ENCODE measurements at regions of chr15 and their contacts with region 1.

Region 1: DNA sequence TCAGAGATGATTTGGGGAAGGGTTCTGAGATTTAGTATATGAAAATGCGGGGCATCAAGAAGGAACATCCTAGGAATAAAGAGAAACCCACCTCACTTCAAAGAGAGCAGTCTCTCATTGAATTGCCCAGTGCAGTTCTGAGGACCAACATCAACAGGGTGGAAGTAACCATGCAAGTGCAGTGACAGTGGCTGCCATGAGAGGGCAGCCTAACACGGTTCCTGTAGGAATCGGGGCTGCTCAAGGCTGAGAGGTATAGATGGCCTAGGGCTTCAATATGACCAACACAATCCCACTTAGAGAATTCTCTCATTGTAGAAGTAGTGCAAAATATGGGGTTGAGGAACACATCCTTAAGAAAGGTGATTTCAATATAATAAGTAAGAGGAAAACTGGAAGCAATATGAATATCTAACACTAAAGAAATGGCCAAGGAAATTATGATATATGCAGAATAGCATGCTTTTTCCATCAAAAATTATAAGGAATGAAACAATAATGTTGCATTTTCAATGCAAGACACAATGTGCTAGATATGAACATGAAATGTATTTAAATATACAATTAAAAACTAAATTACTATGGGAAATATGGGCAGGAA is 51.1 kb upstream of the ARRDC4 start:
- DNase-seq: peak; percentile 74 to 86
- H3K4me3 ChIP-seq: no peak overlapping the region
- H3K27ac ChIP-seq: no peak overlapping the region
- H3K4me1 ChIP-seq: peaks cover 0 to 4% (median 1%) of the 10 kb centered on the region in 4 donors
- H3K27me3 ChIP-seq: peaks cover 0 to 39% (median 6%) of the 10 kb centered on the region in 3 donors
- CTCF ChIP-seq: peak in 5 of 7 experiments; percentile 79 to 91 (median 85)
- EP300 ChIP-seq: no peak
- POLR2A ChIP-seq: no peak

Region 2: DNA sequence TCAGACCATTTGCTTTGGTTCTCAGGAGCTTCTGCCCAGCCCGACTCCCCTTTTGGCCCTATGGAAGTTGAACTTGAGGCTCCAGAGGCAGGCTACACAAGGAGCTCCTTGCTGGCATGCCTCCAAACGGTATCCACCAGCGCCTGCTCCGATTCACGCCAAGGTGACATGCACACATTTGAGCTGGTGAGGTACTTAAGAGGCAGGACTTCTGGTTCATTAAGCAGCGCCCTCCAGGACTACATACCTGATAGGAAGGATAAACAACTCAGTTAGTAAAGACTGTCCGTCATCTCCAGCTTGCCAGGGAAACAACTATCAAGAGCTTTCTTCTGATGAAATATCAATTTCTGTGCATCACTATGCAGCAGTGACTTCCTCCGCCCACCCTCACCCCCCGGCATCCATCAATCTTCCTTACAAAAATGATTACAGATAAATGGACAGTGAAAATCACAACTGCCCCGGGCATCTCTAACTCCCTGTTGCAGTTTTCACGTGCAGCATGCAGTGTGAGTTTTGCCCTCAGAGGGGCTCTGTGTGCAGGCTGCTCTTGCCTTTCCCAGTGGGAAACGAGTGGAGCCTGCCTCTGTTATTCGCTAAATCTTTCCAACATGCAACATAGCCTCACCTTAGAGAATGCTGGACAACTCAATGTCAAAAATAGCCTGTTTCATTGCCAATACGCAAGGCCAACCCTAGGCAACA is 174.0 kb after region 1 on chr15:
- intact Hi-C with region 1: loop called (anchors 5 kb)
- DNase-seq: peak in 1 of 2 donors; percentile 49
- H3K4me3 ChIP-seq: no peak overlapping the region
- H3K27ac ChIP-seq: no peak overlapping the region
- H3K4me1 ChIP-seq: no peaks in the 10 kb centered on the region
- H3K27me3 ChIP-seq: no peaks in the 10 kb centered on the region
- CTCF ChIP-seq: no peak
- EP300 ChIP-seq: no peak
- POLR2A ChIP-seq: no peak

Region 3: GRCh38 chr15:98177924-98178592 is 268.7 kb after region 1 on chr15:
- intact Hi-C with region 1: loop called (anchors 5 kb)
- DNase-seq: peak; percentile 28 to 88
- H3K4me3 ChIP-seq: no peak overlapping the region
- H3K27ac ChIP-seq: no peak overlapping the region
- H3K4me1 ChIP-seq: peaks cover 0 to 5% (median 0%) of the 10 kb centered on the region in 4 donors
- H3K27me3 ChIP-seq: peaks cover 0 to 42% (median 9%) of the 10 kb centered on the region in 3 donors
- CTCF ChIP-seq: peak in 5 of 7 experiments; percentile 38 to 66 (median 56)
- EP300 ChIP-seq: no peak
- POLR2A ChIP-seq: no peak

Region 4: GRCh38 chr15:98296653-98297052 is 387.3 kb after region 1 on chr15:
- intact Hi-C with region 1: loop called (anchors 5 kb)
- DNase-seq: no peak
- H3K4me3 ChIP-seq: no peak overlapping the region
- H3K27ac ChIP-seq: no peak overlapping the region
- H3K4me1 ChIP-seq: peaks cover 7 to 12% (median 8%) of the 10 kb centered on the region in 4 donors
- H3K27me3 ChIP-seq: peaks cover 0 to 46% (median 13%) of the 10 kb centered on the region in 3 donors
- CTCF ChIP-seq: no peak
- EP300 ChIP-seq: no peak
- POLR2A ChIP-seq: no peak

Measured in stomach (tissue), 19 donors.